ENCODE measurements at regions of chr5 and their contacts with region 1.

Region 1: GRCh38 chr5:142151436-142152383 is 43.1 kb downstream of the NDFIP1 start:
- DNase-seq: peak in 6 of 9 donors; percentile 49 to 69 (median 62)
- ATAC-seq: peak; percentile 87
- H3K4me3 ChIP-seq: no peak overlapping the region
- H3K4me3 Mint-ChIP-seq: no peak overlapping the region
- H3K27ac ChIP-seq: no peak overlapping the region
- H3K27ac Mint-ChIP-seq: peak overlapping the region in 2 of 9 donors; percentile 16 to 56
- H3K4me1 ChIP-seq: no peaks in the 10 kb centered on the region
- H3K4me1 Mint-ChIP-seq: peaks cover 0 to 26% (median 9%) of the 10 kb centered on the region in 7 donors
- H3K27me3 ChIP-seq: no peaks in the 10 kb centered on the region
- H3K27me3 Mint-ChIP-seq: no peaks in the 10 kb centered on the region

Region 2: GRCh38 chr5:142115937-142116614 is 35.6 kb before region 1 on chr5:
- CTCF ChIA-PET with region 1: no interaction called
- POLR2A ChIA-PET with region 1: no interaction called
- intact Hi-C with region 1: no loop called
- DNase-seq: no peak
- ATAC-seq: no peak
- H3K4me3 ChIP-seq: no peak overlapping the region
- H3K4me3 Mint-ChIP-seq: peak overlapping the region in 9 of 10 donors; percentile 34 to 75 (median 56)
- H3K27ac ChIP-seq: no peak overlapping the region
- H3K27ac Mint-ChIP-seq: peak overlapping the region in 6 of 9 donors; percentile 17 to 71 (median 40)
- H3K4me1 ChIP-seq: peaks cover 23 to 66% of the 10 kb centered on the region in 2 donors
- H3K4me1 Mint-ChIP-seq: peaks cover 58 to 94% (median 83%) of the 10 kb centered on the region in 7 donors
- H3K27me3 ChIP-seq: no peaks in the 10 kb centered on the region
- H3K27me3 Mint-ChIP-seq: no peaks in the 10 kb centered on the region

Region 3: GRCh38 chr5:142324871-142325724 is 173.4 kb after region 1 on chr5 and contains the start of gene SPRY4:
- CTCF ChIA-PET with region 1: no interaction called
- POLR2A ChIA-PET with region 1: no interaction called
- intact Hi-C with region 1: loop called in 1 of 2 experiments (anchors 10 kb)
- DNase-seq: peak; percentile 35 to 86 (median 82)
- ATAC-seq: peak; percentile 82
- H3K4me3 ChIP-seq: peak within 1 kb of the TSS; percentile 62
- H3K4me3 Mint-ChIP-seq: peak within 1 kb of the TSS; percentile 85 to 93 (median 88)
- H3K27ac ChIP-seq: no peak within 1 kb of the TSS
- H3K27ac Mint-ChIP-seq: peak within 1 kb of the TSS in 3 of 9 donors; percentile 48 to 62 (median 53)
- H3K4me1 ChIP-seq: peaks cover 20 to 25% of the 10 kb centered on the region in 2 donors
- H3K4me1 Mint-ChIP-seq: peaks cover 19 to 41% (median 32%) of the 10 kb centered on the region in 7 donors
- H3K27me3 ChIP-seq: peaks cover 3 to 24% of the 10 kb centered on the region in 2 donors
- H3K27me3 Mint-ChIP-seq: peaks cover 57 to 69% (median 66%) of the 10 kb centered on the region in 5 donors
- total RNA-seq, gene SPRY4: 0.08 to 0.34 (median 0.11) TPM in 3 of 5 experiments, not detected in the others

Region 4: GRCh38 chr5:142408981-142409481 is 257.3 kb after region 1 on chr5:
- CTCF ChIA-PET with region 1: no interaction called
- POLR2A ChIA-PET with region 1: no interaction called
- intact Hi-C with region 1: no loop called
- DNase-seq: no peak
- ATAC-seq: no peak
- H3K4me3 ChIP-seq: no peak overlapping the region
- H3K4me3 Mint-ChIP-seq: no peak overlapping the region
- H3K27ac ChIP-seq: no peak overlapping the region
- H3K27ac Mint-ChIP-seq: no peak overlapping the region
- H3K4me1 ChIP-seq: no peaks in the 10 kb centered on the region
- H3K4me1 Mint-ChIP-seq: peaks cover 0 to 14% (median 0%) of the 10 kb centered on the region in 7 donors
- H3K27me3 ChIP-seq: no peaks in the 10 kb centered on the region
- H3K27me3 Mint-ChIP-seq: peaks cover 0 to 10% (median 0%) of the 10 kb centered on the region in 5 donors

Region 5: DNA sequence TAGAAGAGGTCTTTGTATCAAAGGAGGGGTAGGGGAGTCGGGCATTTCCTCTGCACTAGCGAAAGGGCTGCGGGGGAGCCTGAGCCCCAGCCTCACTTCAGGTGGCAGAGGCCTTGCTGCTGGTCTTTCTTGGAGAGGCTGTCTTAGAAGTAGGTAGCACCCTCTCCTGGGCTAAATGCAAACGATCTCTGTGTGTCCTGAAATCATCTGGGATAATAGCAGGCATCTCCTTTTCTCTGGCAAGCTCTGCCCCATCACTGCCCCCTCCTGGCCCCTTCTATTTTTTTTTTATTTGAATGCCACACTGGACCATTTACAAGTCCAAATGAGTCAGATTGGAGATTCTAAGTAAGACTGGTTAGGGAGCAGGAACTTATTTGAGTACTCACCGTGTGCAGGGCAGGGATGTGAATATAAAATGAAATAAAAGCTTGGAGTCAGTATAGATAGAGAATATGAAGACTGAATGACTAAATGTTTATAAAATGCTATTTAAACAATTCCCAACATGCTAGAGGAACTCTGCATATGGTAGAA is 397.1 kb after region 1 on chr5:
- CTCF ChIA-PET with region 1: interaction called, 6 read pairs
- POLR2A ChIA-PET with region 1: no interaction called
- intact Hi-C with region 1: loop called (anchors 1 kb)
- DNase-seq: peak in 5 of 9 donors; percentile 2 to 33 (median 20)
- ATAC-seq: peak; percentile 48
- H3K4me3 ChIP-seq: no peak overlapping the region
- H3K4me3 Mint-ChIP-seq: no peak overlapping the region
- H3K27ac ChIP-seq: no peak overlapping the region
- H3K27ac Mint-ChIP-seq: no peak overlapping the region
- H3K4me1 ChIP-seq: no peaks in the 10 kb centered on the region
- H3K4me1 Mint-ChIP-seq: peaks cover 0 to 20% (median 9%) of the 10 kb centered on the region in 7 donors
- H3K27me3 ChIP-seq: peaks cover 2 to 10% of the 10 kb centered on the region in 2 donors
- H3K27me3 Mint-ChIP-seq: peaks cover 17 to 51% (median 25%) of the 10 kb centered on the region in 5 donors

Region 6: DNA sequence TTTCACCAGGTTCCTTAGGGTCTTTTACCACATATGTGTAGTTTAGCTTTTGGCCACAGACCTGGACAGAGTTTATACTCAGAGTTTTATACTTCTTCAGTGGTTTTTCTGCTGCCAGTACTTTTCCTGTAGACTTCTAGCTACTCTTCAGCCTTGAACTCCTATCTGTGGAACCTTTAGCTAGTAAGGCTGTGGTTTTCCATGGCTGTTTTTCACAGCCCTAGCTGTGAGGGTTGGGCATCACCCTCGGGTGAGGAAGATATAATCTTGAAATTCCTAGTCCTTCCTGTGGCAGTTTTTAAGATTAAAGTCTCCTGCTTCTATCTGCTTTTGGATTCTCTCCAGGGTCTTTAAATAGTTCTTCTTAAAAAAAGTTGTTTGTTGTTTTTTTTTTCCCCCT is 425.1 kb after region 1 on chr5:
- CTCF ChIA-PET with region 1: no interaction called
- POLR2A ChIA-PET with region 1: no interaction called
- intact Hi-C with region 1: no loop called
- DNase-seq: no peak
- ATAC-seq: no peak
- H3K4me3 ChIP-seq: no peak overlapping the region
- H3K4me3 Mint-ChIP-seq: no peak overlapping the region
- H3K27ac ChIP-seq: no peak overlapping the region
- H3K27ac Mint-ChIP-seq: no peak overlapping the region
- H3K4me1 ChIP-seq: peaks cover 16 to 22% of the 10 kb centered on the region in 2 donors
- H3K4me1 Mint-ChIP-seq: peaks cover 16 to 55% (median 37%) of the 10 kb centered on the region in 7 donors
- H3K27me3 ChIP-seq: no peaks in the 10 kb centered on the region
- H3K27me3 Mint-ChIP-seq: peaks cover 0 to 6% (median 0%) of the 10 kb centered on the region in 5 donors

Region 7: DNA sequence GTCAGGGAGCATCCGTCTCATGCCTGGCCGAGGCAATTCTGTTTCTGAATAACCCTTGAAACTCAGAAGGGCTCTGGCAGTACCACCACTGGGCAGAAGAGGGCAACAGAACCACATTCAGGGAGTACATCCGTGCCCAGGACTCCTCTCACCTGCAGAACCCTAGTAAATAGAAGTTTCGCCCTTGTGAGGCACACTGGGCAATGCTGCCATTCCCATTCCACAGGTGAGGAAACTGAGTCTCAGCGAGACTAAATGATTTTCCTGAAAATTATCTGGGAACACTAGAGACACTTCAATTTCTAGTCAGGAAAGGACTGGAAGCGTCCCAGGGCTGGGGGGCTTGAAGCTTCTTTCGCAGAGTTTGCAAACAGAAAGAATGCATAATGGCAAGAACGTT is 459.4 kb after region 1 on chr5:
- CTCF ChIA-PET with region 1: no interaction called
- POLR2A ChIA-PET with region 1: no interaction called
- intact Hi-C with region 1: loop called (anchors 1 to 5 kb)
- DNase-seq: peak; percentile 21 to 68 (median 54)
- ATAC-seq: peak; percentile 86
- H3K4me3 ChIP-seq: no peak overlapping the region
- H3K4me3 Mint-ChIP-seq: no peak overlapping the region
- H3K27ac ChIP-seq: no peak overlapping the region
- H3K27ac Mint-ChIP-seq: no peak overlapping the region
- H3K4me1 ChIP-seq: no peaks in the 10 kb centered on the region
- H3K4me1 Mint-ChIP-seq: peaks cover 0 to 5% (median 2%) of the 10 kb centered on the region in 7 donors
- H3K27me3 ChIP-seq: no peaks in the 10 kb centered on the region
- H3K27me3 Mint-ChIP-seq: peaks cover 3 to 22% (median 11%) of the 10 kb centered on the region in 5 donors

Region 8: GRCh38 chr5:142699184-142699720 is 547.5 kb after region 1 on chr5:
- CTCF ChIA-PET with region 1: interaction called, 6 read pairs
- POLR2A ChIA-PET with region 1: no interaction called
- intact Hi-C with region 1: loop called (anchors 1 kb)
- DNase-seq: peak; percentile 53 to 79 (median 68)
- ATAC-seq: peak; percentile 95
- H3K4me3 ChIP-seq: no peak overlapping the region
- H3K4me3 Mint-ChIP-seq: no peak overlapping the region
- H3K27ac ChIP-seq: no peak overlapping the region
- H3K27ac Mint-ChIP-seq: no peak overlapping the region
- H3K4me1 ChIP-seq: no peaks in the 10 kb centered on the region
- H3K4me1 Mint-ChIP-seq: peaks cover 0 to 10% (median 2%) of the 10 kb centered on the region in 7 donors
- H3K27me3 ChIP-seq: no peaks in the 10 kb centered on the region
- H3K27me3 Mint-ChIP-seq: peaks cover 0 to 19% (median 5%) of the 10 kb centered on the region in 5 donors

Region 9: GRCh38 chr5:142881076-142881783 is 729.5 kb after region 1 on chr5:
- CTCF ChIA-PET with region 1: no interaction called
- POLR2A ChIA-PET with region 1: no interaction called
- intact Hi-C with region 1: loop called (anchors 5 kb)
- DNase-seq: no peak
- ATAC-seq: peak; percentile 84
- H3K4me3 ChIP-seq: no peak overlapping the region
- H3K4me3 Mint-ChIP-seq: no peak overlapping the region
- H3K27ac ChIP-seq: no peak overlapping the region
- H3K27ac Mint-ChIP-seq: no peak overlapping the region
- H3K4me1 ChIP-seq: peaks cover 0 to 3% of the 10 kb centered on the region in 2 donors
- H3K4me1 Mint-ChIP-seq: peaks cover 0 to 11% (median 5%) of the 10 kb centered on the region in 7 donors
- H3K27me3 ChIP-seq: no peaks in the 10 kb centered on the region
- H3K27me3 Mint-ChIP-seq: no peaks in the 10 kb centered on the region